ENCODE measurements at regions of chr20 and their contacts with region 1.

Region 1: DNA sequence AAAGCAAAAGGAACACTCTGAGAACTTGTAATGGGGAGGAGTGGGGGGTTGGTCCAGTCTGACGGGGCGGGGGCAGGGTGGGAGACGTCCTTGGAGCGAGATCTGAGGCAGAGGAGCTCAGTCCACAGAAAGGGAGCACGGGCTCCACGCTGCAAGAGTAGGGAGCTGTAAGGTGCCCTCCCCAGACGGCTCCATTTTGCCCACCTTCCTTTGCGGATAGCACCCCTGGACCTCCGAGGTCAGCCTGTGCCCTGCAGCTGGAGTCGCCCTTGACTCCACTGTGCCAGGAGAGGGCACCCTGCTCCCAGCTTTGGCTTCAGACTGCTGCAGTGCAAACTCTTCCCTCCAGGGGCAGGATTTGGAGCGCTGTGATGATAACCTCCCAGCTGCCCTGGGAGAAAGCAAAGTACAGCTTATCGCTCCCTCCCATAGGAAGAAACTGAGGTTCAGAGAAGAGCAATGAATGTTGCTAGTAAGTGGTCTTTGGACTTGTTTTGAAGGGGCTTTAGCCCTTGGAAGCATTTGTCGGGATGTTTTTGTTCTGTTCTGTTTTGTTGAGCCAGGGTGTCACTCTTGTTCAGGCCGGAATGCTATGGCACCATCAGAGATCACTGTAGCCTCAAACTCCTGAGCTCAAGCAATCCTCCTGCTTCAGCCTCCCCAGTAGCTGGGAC is 9.5 kb upstream of the AHCY start:
- DNase-seq: peak; percentile 90
- H3K4me3 Mint-ChIP-seq: no peak overlapping the region
- H3K27ac Mint-ChIP-seq: no peak overlapping the region
- H3K4me1 Mint-ChIP-seq: peaks cover 20% of the 10 kb centered on the region
- H3K27me3 Mint-ChIP-seq: peaks cover 22% of the 10 kb centered on the region

Region 2: DNA sequence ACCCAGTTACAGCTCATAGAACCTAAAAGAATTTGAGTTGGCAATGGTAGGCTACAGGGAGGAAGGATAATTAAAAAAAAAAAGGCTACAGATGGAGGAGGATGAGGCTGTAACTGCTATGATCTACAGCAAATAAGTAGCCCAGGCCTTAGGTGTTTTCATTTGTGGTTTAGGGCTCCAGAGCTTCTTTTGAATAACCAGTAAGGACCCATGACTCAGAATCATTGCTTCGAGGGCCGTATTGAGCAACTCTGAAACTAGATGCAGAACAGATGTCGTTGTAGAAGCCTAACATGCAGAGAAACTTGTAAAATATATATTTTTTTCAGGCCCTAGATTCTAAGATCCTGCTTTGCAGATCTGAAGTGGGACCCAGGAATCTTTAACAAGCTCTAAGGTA is 90.5 kb before region 1 on chr20:
- CTCF ChIA-PET with region 1: no interaction called
- POLR2A ChIA-PET with region 1: no interaction called
- DNase-seq: no peak
- H3K4me3 Mint-ChIP-seq: no peak overlapping the region
- H3K27ac Mint-ChIP-seq: no peak overlapping the region
- H3K4me1 Mint-ChIP-seq: peaks cover 6% of the 10 kb centered on the region
- H3K27me3 Mint-ChIP-seq: peaks cover 20% of the 10 kb centered on the region

Region 3: GRCh38 chr20:34285450-34285849 is 27.2 kb before region 1 on chr20:
- CTCF ChIA-PET with region 1: interaction called, 10 read pairs
- POLR2A ChIA-PET with region 1: no interaction called
- DNase-seq: no peak
- H3K4me3 Mint-ChIP-seq: no peak overlapping the region
- H3K27ac Mint-ChIP-seq: no peak overlapping the region
- H3K4me1 Mint-ChIP-seq: no peaks in the 10 kb centered on the region
- H3K27me3 Mint-ChIP-seq: no peaks in the 10 kb centered on the region

Region 4: GRCh38 chr20:34363062-34363464 is 50.4 kb after region 1 on chr20 and contains the start of gene ITCH:
- CTCF ChIA-PET with region 1: interaction called, 16 read pairs
- POLR2A ChIA-PET with region 1: interaction called, 6 read pairs
- DNase-seq: peak; percentile 94
- H3K4me3 Mint-ChIP-seq: peak within 1 kb of the TSS; percentile 96
- H3K27ac Mint-ChIP-seq: peak within 1 kb of the TSS; percentile 90
- H3K4me1 Mint-ChIP-seq: peaks cover 46% of the 10 kb centered on the region
- H3K27me3 Mint-ChIP-seq: peaks cover 3% of the 10 kb centered on the region
- total RNA-seq, gene ITCH: 55.5 to 56.7 TPM

Region 5: GRCh38 chr20:34420146-34420545 is 107.5 kb after region 1 on chr20:
- CTCF ChIA-PET with region 1: interaction called, 11 read pairs
- POLR2A ChIA-PET with region 1: interaction called, 3 read pairs
- DNase-seq: no peak
- H3K4me3 Mint-ChIP-seq: no peak overlapping the region
- H3K27ac Mint-ChIP-seq: no peak overlapping the region
- H3K4me1 Mint-ChIP-seq: peaks cover 16% of the 10 kb centered on the region
- H3K27me3 Mint-ChIP-seq: no peaks in the 10 kb centered on the region

Region 6: GRCh38 chr20:34473262-34473883 is 160.7 kb after region 1 on chr20:
- CTCF ChIA-PET with region 1: interaction called, 34 read pairs
- POLR2A ChIA-PET with region 1: no interaction called
- DNase-seq: peak; percentile 44
- H3K4me3 Mint-ChIP-seq: no peak overlapping the region
- H3K27ac Mint-ChIP-seq: no peak overlapping the region
- H3K4me1 Mint-ChIP-seq: peaks cover 11% of the 10 kb centered on the region
- H3K27me3 Mint-ChIP-seq: no peaks in the 10 kb centered on the region

Region 7: DNA sequence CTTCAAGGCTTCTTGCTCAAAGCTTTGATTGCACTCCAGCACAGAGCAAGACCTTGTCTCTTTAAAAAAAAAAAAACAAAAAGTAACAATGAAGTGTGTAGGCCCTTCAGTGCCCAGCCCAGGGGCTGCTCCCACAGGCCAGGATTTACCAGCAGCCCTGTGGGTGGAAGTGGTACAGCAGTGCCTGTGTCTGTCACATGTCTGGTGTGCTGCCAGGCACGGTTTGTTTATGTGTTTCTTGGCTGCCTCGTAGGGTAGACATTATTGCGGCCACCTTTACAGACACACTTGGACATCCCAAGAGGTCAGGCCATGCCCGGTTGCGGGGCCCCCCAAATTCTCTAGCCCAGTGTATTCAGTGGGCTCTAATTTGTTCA is 216.2 kb after region 1 on chr20:
- CTCF ChIA-PET with region 1: interaction called, 47 read pairs
- POLR2A ChIA-PET with region 1: no interaction called
- DNase-seq: no peak
- H3K4me3 Mint-ChIP-seq: no peak overlapping the region
- H3K27ac Mint-ChIP-seq: no peak overlapping the region
- H3K4me1 Mint-ChIP-seq: peaks cover 2% of the 10 kb centered on the region
- H3K27me3 Mint-ChIP-seq: no peaks in the 10 kb centered on the region

Region 8: GRCh38 chr20:34704177-34705007 is 391.7 kb after region 1 on chr20 and contains the start of gene TP53INP2:
- CTCF ChIA-PET with region 1: interaction called, 13 read pairs
- POLR2A ChIA-PET with region 1: interaction called, 3 read pairs
- DNase-seq: peak; percentile 92
- H3K4me3 Mint-ChIP-seq: peak within 1 kb of the TSS; percentile 91
- H3K27ac Mint-ChIP-seq: peak within 1 kb of the TSS; percentile 86
- H3K4me1 Mint-ChIP-seq: peaks cover 41% of the 10 kb centered on the region
- H3K27me3 Mint-ChIP-seq: peaks cover 13% of the 10 kb centered on the region
- total RNA-seq, gene TP53INP2: 3.3 TPM

Measured in activated CD4-positive, alpha-beta memory T cell treated with anti-CD3 and anti-CD28 coated beads, Interleukin-2, amount 10 ng/mL, durations not matched to agents 7 days and 5 days (primary cell).